Activated CD8-positive, alpha-beta T cell treated with anti-CD3 and anti-CD28 coated beads for 36 hours (primary cell): ENCODE measurements at regions of chr13 and their contacts with region 1.

Region 1: DNA sequence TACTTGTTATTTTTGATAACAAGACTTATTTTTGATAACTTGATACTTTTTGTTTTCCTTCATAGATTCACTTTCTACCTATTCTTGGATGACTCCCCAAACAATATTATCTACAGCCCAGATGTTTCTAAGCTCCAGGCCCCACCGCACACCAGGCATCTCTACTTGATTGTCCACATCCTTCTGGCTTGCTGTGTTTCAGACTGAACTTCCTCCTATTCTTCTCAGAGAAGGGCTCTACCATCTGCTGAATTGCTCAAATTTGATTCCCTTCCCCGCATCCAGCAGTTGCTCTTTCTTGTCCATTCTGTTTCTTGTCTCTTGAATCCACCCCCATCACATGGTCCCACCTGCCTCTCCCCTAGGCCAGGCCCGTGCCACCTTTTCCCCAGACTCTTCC is 13.0 kb downstream of the NUDT15 start:
- DNase-seq: no peak
- ATAC-seq: no peak
- H3K4me3 Mint-ChIP-seq: no peak overlapping the region
- H3K27ac Mint-ChIP-seq: no peak overlapping the region
- H3K4me1 Mint-ChIP-seq: no peaks in the 10 kb centered on the region
- H3K27me3 Mint-ChIP-seq: no peaks in the 10 kb centered on the region
- CTCF ChIP-seq: no peak

Region 2: GRCh38 chr13:48037346-48038173 is 13.0 kb before region 1 on chr13 and contains the start of gene NUDT15:
- CTCF ChIA-PET with region 1: interaction called, 28 read pairs
- POLR2A ChIA-PET with region 1: interaction called, 9 read pairs
- intact Hi-C with region 1: no loop called
- DNase-seq: peak; percentile 97
- ATAC-seq: peak; percentile 89
- H3K4me3 Mint-ChIP-seq: peak within 1 kb of the TSS; percentile 90
- H3K27ac Mint-ChIP-seq: peak within 1 kb of the TSS; percentile 97
- H3K4me1 Mint-ChIP-seq: peaks cover 40% of the 10 kb centered on the region
- H3K27me3 Mint-ChIP-seq: no peaks in the 10 kb centered on the region
- CTCF ChIP-seq: peak; percentile 99
- total RNA-seq, gene NUDT15: 22.8 to 23.5 TPM

Region 3: GRCh38 chr13:48266701-48267639 is 216.4 kb after region 1 on chr13:
- CTCF ChIA-PET with region 1: no interaction called
- POLR2A ChIA-PET with region 1: no interaction called
- intact Hi-C with region 1: no loop called
- DNase-seq: no peak
- ATAC-seq: no peak
- H3K4me3 Mint-ChIP-seq: no peak overlapping the region
- H3K27ac Mint-ChIP-seq: peak overlapping the region; percentile 32
- H3K4me1 Mint-ChIP-seq: peaks cover 50% of the 10 kb centered on the region
- H3K27me3 Mint-ChIP-seq: no peaks in the 10 kb centered on the region
- CTCF ChIP-seq: no peak